ENCODE measurements at regions of chr2 and their contacts with region 1.

Region 1: DNA sequence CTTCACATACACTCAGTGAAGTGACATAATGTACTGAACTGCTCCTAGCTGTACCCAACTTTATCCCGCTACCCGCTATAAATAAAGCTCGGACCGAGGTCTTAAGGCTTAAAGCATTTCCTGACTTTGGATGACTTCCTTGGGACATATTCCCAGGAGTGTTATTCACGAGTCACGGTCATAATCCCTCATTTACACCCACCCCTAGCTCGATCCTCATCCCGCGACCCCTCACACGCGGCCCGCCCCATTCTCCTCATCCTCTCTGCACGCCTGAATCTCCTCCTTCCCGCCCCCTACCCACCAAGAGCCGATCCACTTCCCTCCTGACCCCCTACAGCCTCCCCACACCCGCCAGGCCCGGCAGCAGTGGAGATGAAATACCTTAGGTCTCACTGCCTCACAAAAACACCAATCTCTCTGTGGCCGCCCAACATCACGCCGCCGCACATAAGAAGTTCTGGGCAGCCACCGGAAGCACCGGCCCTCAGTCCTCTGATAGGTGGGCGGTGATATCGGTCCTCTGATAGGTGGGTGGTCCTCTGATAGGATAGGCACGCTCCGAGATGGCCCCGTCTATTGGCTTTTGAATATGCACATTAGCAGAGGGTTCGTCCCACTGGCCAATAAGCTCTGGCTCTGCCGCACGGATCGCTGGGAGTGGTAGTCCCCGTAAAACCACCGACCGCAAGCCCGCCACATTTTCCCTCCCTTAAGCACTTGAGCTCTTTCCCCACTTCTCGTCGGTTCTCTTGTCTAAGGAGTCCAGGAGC is at the start of gene WDCP:
- DNase-seq: peak; percentile 89 to 97
- ATAC-seq: peak; percentile 99 to 100 (median 99)
- H3K4me3 ChIP-seq: peak within 1 kb of the TSS; percentile 39 to 87 (median 74)
- H3K27ac ChIP-seq: peak within 1 kb of the TSS in 9 of 10 donors; percentile 47 to 87 (median 71)
- H3K4me1 ChIP-seq: peaks cover 0 to 38% (median 29%) of the 10 kb centered on the region in 9 donors
- H3K27me3 ChIP-seq: peaks cover 0 to 22% (median 0%) of the 10 kb centered on the region in 7 donors
- CTCF ChIP-seq: no peak
- total RNA-seq, gene WDCP: 4.8 to 10.1 (median 6.2) TPM

Region 2: GRCh38 chr2:23828986-23829385 is 218.1 kb before region 1 on chr2:
- intact Hi-C with region 1: no loop called
- DNase-seq: no peak
- ATAC-seq: no peak
- H3K4me3 ChIP-seq: no peak overlapping the region
- H3K27ac ChIP-seq: no peak overlapping the region
- H3K4me1 ChIP-seq: peaks cover 0 to 7% (median 0%) of the 10 kb centered on the region in 9 donors
- H3K27me3 ChIP-seq: no peaks in the 10 kb centered on the region
- CTCF ChIP-seq: no peak

Region 3: DNA sequence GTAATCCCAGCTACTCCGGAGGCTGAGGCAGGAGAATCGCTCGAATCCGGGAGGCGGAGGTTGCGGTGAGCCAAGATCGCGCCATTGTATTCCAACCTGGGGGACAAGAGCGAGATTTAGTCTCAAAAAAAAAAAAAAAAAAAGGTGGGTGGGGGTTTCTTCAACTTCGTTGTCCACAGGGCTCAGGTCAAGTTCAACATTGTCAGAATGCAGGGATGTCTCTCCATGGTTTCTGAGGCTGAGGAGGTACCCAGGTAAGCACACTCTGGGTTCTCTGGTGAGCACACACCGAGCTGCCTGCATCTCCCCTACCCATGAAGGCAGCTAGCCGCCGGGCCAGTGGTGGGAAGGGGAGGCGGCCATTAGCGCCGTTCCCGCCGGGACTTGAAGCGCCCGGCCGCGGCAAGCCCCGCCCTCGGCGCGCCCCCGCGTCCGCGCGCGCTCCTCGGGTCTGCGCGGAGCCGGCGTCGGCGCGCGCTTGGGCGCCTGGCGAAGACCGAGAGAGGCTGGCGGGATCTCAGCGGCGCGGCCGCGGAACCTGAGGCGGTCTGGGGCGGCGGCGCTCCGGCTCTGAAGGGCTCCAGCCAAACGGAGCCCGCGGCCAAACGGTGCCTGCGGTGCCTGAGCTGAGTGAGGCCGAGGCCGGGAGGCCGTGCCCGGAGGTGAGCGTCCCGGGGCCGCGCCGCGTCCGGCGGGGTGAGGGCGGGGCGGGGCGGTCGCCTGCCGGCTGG is 107.0 kb before region 1 on chr2 and contains the start of gene UBXN2A:
- intact Hi-C with region 1: loop called in 1 of 10 experiments (anchors 10 kb)
- DNase-seq: peak; percentile 71 to 82
- ATAC-seq: peak; percentile 90 to 97 (median 96)
- H3K4me3 ChIP-seq: peak within 1 kb of the TSS; percentile 71 to 99 (median 92)
- H3K27ac ChIP-seq: peak within 1 kb of the TSS; percentile 84 to 97 (median 95)
- H3K4me1 ChIP-seq: peaks cover 3 to 34% (median 24%) of the 10 kb centered on the region in 9 donors
- H3K27me3 ChIP-seq: no peaks in the 10 kb centered on the region
- CTCF ChIP-seq: no peak
- total RNA-seq, gene UBXN2A: 18.8 to 23.8 (median 19.8) TPM

Region 4: DNA sequence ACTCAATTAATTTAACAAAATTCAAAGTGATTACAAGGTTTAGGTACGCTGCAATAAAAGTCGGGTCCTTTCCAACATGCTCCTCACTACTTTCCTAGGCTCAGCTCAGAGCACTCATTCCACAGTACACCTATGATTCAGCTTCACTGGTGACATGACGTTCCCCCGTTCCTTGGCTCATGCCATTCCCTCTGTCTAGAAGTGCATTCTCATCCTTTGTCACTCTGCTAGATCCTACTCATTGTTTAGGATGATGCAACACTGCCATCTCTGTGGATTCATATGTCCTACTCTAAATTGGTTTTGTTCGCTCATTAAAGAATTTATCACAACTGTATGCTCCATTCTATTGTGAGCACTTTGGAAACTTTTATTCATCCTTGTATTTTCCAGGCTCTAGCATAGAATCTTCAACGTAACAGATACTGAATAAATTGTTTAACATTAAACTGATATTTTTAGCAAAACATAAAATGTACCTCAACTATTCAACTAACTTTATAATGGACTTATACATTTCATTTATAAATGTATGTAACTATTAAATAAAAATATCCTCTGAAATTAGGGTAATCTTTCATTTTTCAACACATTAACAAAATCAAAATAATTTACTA is 206.3 kb after region 1 on chr2:
- intact Hi-C with region 1: no loop called
- DNase-seq: no peak
- ATAC-seq: no peak
- H3K4me3 ChIP-seq: no peak overlapping the region
- H3K27ac ChIP-seq: no peak overlapping the region
- H3K4me1 ChIP-seq: peaks cover 0 to 1% (median 0%) of the 10 kb centered on the region in 9 donors
- H3K27me3 ChIP-seq: no peaks in the 10 kb centered on the region
- CTCF ChIP-seq: no peak

Region 5: DNA sequence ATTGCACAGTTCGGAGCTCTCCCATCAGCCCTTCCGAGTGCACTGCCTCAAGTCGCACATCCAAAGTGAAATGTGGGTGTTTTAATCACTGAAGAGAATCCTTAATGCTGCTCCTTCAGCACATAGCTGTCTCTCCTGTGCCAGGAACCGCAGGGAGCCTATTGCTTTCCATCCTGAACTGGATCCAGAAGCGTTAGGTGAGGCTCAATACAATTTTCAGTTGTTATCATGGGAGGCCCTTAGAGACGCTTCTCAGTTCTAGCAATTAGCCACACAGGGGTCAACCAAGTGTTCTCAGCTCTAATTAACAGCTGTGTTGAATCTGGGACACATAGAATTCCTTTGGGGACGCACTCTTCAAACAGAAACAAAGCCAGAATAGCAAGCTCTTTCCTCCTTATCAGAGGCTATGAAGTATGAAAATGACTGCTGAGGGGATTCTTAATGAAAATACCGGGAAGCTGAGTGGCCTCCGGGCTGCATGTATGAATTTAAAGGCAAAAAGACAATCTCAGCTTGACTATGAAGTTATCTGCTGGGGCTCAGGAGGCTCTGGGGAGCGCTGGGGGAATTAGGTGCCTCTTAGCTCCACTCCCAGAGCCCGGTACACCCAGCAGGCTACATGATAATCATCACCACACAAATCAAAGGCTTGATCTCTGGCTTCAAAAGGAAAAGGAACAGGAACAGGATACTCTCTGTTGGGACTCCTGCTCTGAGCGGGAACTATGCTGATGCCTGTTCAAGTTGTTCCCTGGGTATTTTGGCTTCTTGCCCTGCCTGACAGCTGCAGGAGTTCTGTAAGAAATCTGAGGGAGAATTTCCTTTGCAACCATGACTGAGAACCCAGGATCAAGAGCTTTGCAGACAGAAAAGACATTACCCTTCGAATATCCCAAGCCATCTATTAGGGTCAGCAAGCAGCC is 388.5 kb after region 1 on chr2:
- intact Hi-C with region 1: no loop called
- DNase-seq: peak; percentile 48 to 91
- ATAC-seq: peak; percentile 75 to 91 (median 88)
- H3K4me3 ChIP-seq: peak overlapping the region in 6 of 10 donors; percentile 5 to 27 (median 20)
- H3K27ac ChIP-seq: peak overlapping the region; percentile 58 to 83 (median 71)
- H3K4me1 ChIP-seq: peaks cover 7 to 56% (median 40%) of the 10 kb centered on the region in 9 donors
- H3K27me3 ChIP-seq: no peaks in the 10 kb centered on the region
- CTCF ChIP-seq: no peak